H1 (cell line): ENCODE measurements at regions of chr9 and their contacts with region 1.

Region 1: GRCh38 chr9:69745716-69746437 is 13.9 kb downstream of the PTAR1 start:
- DNase-seq: no peak
- H3K4me3 ChIP-seq: no peak overlapping the region
- H3K27ac ChIP-seq: no peak overlapping the region
- H3K4me1 ChIP-seq: peaks cover 0 to 2% (median under 1%) of the 10 kb centered on the region in 4 experiments; a peak in 1 of 7 replicates
- H3K27me3 ChIP-seq: no peaks in the 10 kb centered on the region
- CTCF ChIP-seq: peak in 2 of 3 experiments; percentile 24 to 39; a peak in 3 of 4 replicates
- EP300 ChIP-seq: no peak
- POLR2A ChIP-seq: no peak
- RAD21 ChIP-seq: peak; percentile 64 to 71

Region 2: DNA sequence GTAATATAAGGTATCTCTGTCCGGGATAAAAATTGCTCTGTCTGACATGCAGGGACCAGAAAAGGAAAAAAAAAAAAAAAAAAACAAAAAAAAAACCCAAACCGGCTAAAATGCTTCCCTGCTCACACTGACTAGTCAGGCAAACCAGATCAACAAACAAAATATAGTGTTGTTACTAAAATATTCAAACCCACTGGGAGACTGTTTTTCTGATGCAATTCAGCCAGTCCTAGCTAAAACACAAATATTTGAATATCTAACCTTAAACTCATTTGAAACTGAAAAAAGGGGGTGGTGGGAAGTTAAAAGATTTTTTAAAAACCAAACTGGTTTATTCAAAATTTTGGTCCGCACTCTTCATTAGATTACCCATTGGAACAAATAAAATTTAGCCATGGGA is 134.7 kb before region 1 on chr9:
- CTCF ChIA-PET with region 1: no interaction called
- POLR2A ChIA-PET with region 1: no interaction called
- DNase-seq: no peak
- H3K4me3 ChIP-seq: no peak overlapping the region
- H3K27ac ChIP-seq: no peak overlapping the region
- H3K4me1 ChIP-seq: peaks cover 0 to 7% (median 0%) of the 10 kb centered on the region in 4 experiments; a peak in 1 of 7 replicates
- H3K27me3 ChIP-seq: no peaks in the 10 kb centered on the region
- CTCF ChIP-seq: no peak
- EP300 ChIP-seq: no peak
- POLR2A ChIP-seq: no peak
- RAD21 ChIP-seq: no peak

Region 3: GRCh38 chr9:69672596-69673310 is 73.1 kb before region 1 on chr9:
- CTCF ChIA-PET with region 1: interaction called, 14 read pairs
- POLR2A ChIA-PET with region 1: no interaction called
- DNase-seq: peak; percentile 77 to 88
- H3K4me3 ChIP-seq: peak overlapping the region; percentile 56 to 75 (median 62)
- H3K27ac ChIP-seq: no peak overlapping the region
- H3K4me1 ChIP-seq: peaks cover under 1 to 7% (median 3%) of the 10 kb centered on the region in 4 experiments; a peak in 3 of 7 replicates
- H3K27me3 ChIP-seq: peaks cover 7 to 23% (median 16%) of the 10 kb centered on the region in 4 experiments
- CTCF ChIP-seq: peak; percentile 80 to 91 (median 88)
- EP300 ChIP-seq: no peak
- POLR2A ChIP-seq: no peak
- RAD21 ChIP-seq: peak; percentile 57 to 75

Region 4: DNA sequence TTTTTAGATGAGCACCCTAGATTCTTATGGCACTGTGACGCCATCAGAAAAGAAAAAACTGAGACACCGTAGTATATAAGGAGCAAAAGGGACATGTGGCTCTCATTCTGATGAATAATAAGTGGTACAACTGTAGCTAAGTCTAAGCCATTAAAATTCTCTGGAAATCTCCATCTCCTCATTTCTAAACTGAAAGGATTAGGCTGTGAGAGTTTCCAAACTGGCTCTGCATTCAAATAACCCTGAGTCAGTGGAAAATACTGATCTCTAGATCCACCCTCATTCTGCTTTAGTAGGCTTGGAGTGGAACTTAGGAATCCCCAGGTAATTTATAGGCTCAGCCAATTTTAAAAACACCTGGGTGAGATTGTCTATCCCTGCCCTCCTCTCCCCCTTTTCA is 14.5 kb before region 1 on chr9:
- CTCF ChIA-PET with region 1: interaction called, 14 read pairs
- POLR2A ChIA-PET with region 1: interaction called, 5 read pairs
- DNase-seq: no peak
- H3K4me3 ChIP-seq: no peak overlapping the region
- H3K27ac ChIP-seq: no peak overlapping the region
- H3K4me1 ChIP-seq: no peaks in the 10 kb centered on the region
- H3K27me3 ChIP-seq: no peaks in the 10 kb centered on the region
- CTCF ChIP-seq: no peak
- EP300 ChIP-seq: no peak
- POLR2A ChIP-seq: no peak
- RAD21 ChIP-seq: no peak

Region 5: DNA sequence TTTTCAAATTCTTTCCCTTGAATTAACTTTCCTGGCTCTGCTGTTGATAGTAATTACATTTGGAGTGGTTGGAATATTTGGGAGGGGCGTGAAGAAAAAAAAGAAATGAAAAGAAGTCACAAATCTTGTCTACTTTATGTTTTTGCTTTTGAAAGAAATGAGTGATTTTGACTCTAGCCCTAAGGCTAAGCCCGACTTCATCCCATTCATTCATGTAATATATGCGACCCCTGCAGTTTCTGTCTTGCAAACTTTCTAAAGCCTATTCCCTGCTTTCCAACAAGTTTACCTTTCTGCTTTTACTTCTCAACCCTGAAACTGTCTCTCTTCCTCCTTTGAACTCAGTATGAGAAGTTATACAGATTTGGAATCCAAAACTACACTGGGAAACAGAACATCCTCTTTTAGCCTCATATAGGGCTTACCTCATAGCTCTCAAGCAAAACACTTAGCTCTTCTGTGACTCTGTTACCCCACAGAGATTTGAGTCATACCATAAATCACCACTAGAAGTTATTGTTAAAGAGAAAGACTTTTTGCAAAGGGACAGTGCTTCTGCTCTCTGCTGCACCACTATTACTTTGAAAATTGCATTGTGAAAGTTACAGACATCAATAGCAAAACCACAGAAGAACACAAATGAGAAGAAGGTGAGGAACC is 76.3 kb after region 1 on chr9:
- CTCF ChIA-PET with region 1: no interaction called
- POLR2A ChIA-PET with region 1: no interaction called
- DNase-seq: no peak
- H3K4me3 ChIP-seq: peak overlapping the region in 1 of 4 experiments; percentile 60; a peak in 3 of 8 replicates
- H3K27ac ChIP-seq: no peak overlapping the region
- H3K4me1 ChIP-seq: peaks cover 8 to 23% (median 17%) of the 10 kb centered on the region in 4 experiments; a peak in 6 of 7 replicates
- H3K27me3 ChIP-seq: no peaks in the 10 kb centered on the region
- CTCF ChIP-seq: no peak
- EP300 ChIP-seq: no peak
- POLR2A ChIP-seq: no peak
- RAD21 ChIP-seq: 0 out of 4 replicates have a peak, but pooled peaks of 1 of the 2 experiments have one; percentile 13

Region 6: DNA sequence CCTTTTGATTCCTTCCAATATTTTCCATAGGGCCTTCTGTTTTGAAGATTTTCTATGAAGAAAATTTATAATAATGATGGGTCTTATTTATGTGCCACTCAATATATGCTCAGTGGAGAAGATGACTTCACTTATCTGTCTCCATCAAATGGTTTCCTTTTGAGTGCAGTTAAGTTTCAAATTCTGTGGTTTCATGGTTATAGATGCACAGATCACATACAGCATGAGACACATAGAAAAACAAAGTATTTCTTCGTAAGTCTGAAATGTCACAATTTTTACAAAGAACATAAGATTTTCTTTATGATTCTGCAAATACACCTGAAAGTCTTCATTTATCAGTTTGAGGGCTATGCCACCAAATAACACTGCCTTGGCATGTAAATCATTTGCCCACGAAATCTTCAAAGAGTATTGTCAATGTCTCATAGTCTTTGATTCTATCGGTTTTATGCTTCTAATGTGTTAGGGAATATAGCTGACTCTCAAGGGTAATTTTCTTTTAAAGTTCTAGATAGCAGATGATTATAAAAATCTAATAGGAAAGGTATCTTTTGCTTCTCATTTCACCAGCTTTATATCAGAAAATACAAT is 88.8 kb after region 1 on chr9:
- CTCF ChIA-PET with region 1: interaction called, 16 read pairs
- POLR2A ChIA-PET with region 1: no interaction called
- DNase-seq: no peak
- H3K4me3 ChIP-seq: no peak overlapping the region
- H3K27ac ChIP-seq: no peak overlapping the region
- H3K4me1 ChIP-seq: peaks cover 0 to 5% (median 3%) of the 10 kb centered on the region in 4 experiments; a peak in 4 of 7 replicates
- H3K27me3 ChIP-seq: no peaks in the 10 kb centered on the region
- CTCF ChIP-seq: no peak
- EP300 ChIP-seq: no peak
- POLR2A ChIP-seq: no peak
- RAD21 ChIP-seq: no peak

Region 7: GRCh38 chr9:70073193-70073592 is 327.3 kb after region 1 on chr9:
- CTCF ChIA-PET with region 1: no interaction called
- POLR2A ChIA-PET with region 1: no interaction called
- DNase-seq: no peak
- H3K4me3 ChIP-seq: no peak overlapping the region
- H3K27ac ChIP-seq: no peak overlapping the region
- H3K4me1 ChIP-seq: no peaks in the 10 kb centered on the region; a peak in 2 of 7 replicates
- H3K27me3 ChIP-seq: no peaks in the 10 kb centered on the region
- CTCF ChIP-seq: no peak
- EP300 ChIP-seq: no peak
- POLR2A ChIP-seq: no peak
- RAD21 ChIP-seq: no peak